ENCODE measurements at regions of chr9 and their contacts with region 1.

Region 1: GRCh38 chr9:22374051-22374450 is 72.6 kb upstream of the DMRTA1 start:
- DNase-seq: no peak
- ATAC-seq: no peak
- H3K4me3 ChIP-seq: no peak overlapping the region
- H3K27ac ChIP-seq: no peak overlapping the region
- H3K4me1 ChIP-seq: no peaks in the 10 kb centered on the region
- H3K27me3 ChIP-seq: peaks cover 41% of the 10 kb centered on the region
- CTCF ChIP-seq: no peak
- POLR2A ChIP-seq: no peak
- RAD21 ChIP-seq: no peak

Region 2: DNA sequence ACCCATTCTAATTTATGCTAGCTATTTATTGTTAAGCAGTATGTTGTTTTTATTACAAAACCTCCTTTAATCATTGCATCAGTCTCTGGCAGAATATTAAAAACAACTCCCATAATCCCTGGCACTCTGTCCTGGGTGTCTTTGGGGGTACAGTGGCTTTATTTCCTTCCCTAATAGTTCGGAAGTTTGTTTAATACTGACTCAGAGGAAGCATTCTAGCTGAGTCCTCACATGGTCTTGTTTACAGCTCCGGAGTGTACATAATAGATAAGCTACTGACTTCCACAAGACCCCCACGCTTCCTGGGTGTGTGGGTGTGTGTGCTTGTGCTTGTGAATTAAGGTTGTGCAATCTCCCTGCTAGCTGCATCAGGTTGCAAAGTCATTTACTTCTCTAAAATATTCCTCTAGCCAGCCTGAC is 215.1 kb before region 1 on chr9:
- CTCF ChIA-PET with region 1: no interaction called
- POLR2A ChIA-PET with region 1: no interaction called
- RAD21 ChIA-PET with region 1: no interaction called
- intact Hi-C with region 1: no loop called
- DNase-seq: peak; percentile 7
- ATAC-seq: no peak
- H3K4me3 ChIP-seq: no peak overlapping the region
- H3K27ac ChIP-seq: peak overlapping the region; percentile 11; the same call in 1 of the 2 replicates
- H3K4me1 ChIP-seq: peaks cover 21 to 24% of the 10 kb centered on the region in 2 experiments
- H3K27me3 ChIP-seq: no peaks in the 10 kb centered on the region
- CTCF ChIP-seq: no peak
- POLR2A ChIP-seq: no peak
- RAD21 ChIP-seq: no peak

Region 3: DNA sequence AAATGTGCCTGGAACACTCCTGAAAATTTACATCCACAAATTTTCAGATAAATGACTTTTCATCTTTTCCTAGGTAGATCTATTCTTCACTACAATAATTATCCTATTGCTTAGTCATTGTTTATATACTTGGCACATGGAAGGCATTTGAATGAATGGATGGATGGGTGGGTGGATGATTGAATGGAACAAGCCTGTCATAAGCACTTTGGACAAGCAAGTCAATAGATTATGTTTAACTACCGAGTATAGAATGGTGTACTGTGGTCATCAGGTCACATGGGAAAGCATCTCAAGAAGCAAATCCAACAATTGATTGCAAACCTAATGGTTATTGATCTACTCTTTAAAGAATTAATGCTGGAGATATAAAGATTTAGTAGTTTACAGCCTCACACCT is 41.8 kb before region 1 on chr9:
- CTCF ChIA-PET with region 1: no interaction called
- POLR2A ChIA-PET with region 1: no interaction called
- RAD21 ChIA-PET with region 1: no interaction called
- intact Hi-C with region 1: loop called (anchors 10 kb)
- DNase-seq: no peak
- ATAC-seq: no peak
- H3K4me3 ChIP-seq: no peak overlapping the region
- H3K27ac ChIP-seq: no peak overlapping the region
- H3K4me1 ChIP-seq: no peaks in the 10 kb centered on the region
- H3K27me3 ChIP-seq: no peaks in the 10 kb centered on the region
- CTCF ChIP-seq: no peak
- POLR2A ChIP-seq: no peak
- RAD21 ChIP-seq: no peak

Region 4: GRCh38 chr9:22363421-22363887 is 10.6 kb before region 1 on chr9:
- CTCF ChIA-PET with region 1: no interaction called
- POLR2A ChIA-PET with region 1: no interaction called
- RAD21 ChIA-PET with region 1: no interaction called
- intact Hi-C with region 1: loop called (anchors 2 kb)
- DNase-seq: no peak
- ATAC-seq: no peak
- H3K4me3 ChIP-seq: no peak overlapping the region
- H3K27ac ChIP-seq: no peak overlapping the region
- H3K4me1 ChIP-seq: no peaks in the 10 kb centered on the region
- H3K27me3 ChIP-seq: 0 out of 2 replicates have a peak, but pooled peaks cover 14% of the 10 kb centered on the region
- CTCF ChIP-seq: no peak
- POLR2A ChIP-seq: no peak
- RAD21 ChIP-seq: no peak

Region 5: DNA sequence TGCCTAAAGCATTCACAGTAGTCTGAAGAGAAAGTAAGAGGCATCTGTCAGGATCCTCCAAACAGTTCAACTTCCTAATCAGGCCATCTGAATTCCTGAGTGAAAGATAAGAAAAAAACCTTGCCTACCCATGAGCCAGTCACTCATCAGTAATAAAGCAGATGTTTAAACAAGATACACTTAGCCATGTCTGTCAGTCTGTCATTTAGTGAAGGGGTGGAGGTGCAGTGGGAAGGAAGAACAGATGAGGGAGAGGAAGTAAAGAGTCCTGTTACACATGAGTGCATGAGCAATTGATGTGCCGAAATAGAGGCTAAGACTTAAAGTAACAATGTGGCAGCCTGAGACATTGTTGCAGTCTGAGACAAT is 42.6 kb after region 1 on chr9:
- CTCF ChIA-PET with region 1: no interaction called
- POLR2A ChIA-PET with region 1: no interaction called
- RAD21 ChIA-PET with region 1: no interaction called
- intact Hi-C with region 1: no loop called
- DNase-seq: no peak
- ATAC-seq: no peak
- H3K4me3 ChIP-seq: no peak overlapping the region
- H3K27ac ChIP-seq: no peak overlapping the region
- H3K4me1 ChIP-seq: no peaks in the 10 kb centered on the region
- H3K27me3 ChIP-seq: peaks cover 3% of the 10 kb centered on the region; the same call in 1 of the 2 replicates
- CTCF ChIP-seq: no peak
- POLR2A ChIP-seq: no peak
- RAD21 ChIP-seq: no peak